Adrenal gland (tissue), 19 donors: ENCODE measurements at regions of chr13 and their contacts with region 1.

Region 1: DNA sequence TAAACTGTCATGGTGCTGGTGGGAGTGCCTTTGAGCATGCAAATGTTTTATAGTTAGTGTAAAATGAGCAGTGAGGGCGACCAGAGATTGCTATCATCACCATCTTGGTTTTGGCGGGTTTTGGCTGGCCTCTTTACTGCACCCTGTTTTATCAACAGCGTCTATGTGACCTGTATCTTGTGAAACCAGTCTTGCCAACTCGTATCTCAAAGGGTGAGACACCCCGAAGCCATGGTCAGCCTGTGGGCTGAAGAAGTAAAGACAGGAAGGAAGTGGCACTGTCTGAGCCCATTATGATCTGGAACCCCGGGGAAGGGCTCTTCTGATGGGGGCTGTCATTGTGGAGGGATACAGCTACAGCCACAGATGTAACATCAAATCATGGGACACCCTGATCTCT is 81.5 kb upstream of the FAM216B start:
- DNase-seq: no peak
- H3K4me3 ChIP-seq: no peak overlapping the region
- H3K27ac ChIP-seq: no peak overlapping the region
- H3K4me1 ChIP-seq: no peaks in the 10 kb centered on the region
- H3K27me3 ChIP-seq: no peaks in the 10 kb centered on the region
- CTCF ChIP-seq: no peak
- POLR2A ChIP-seq: no peak

Region 2: GRCh38 chr13:42681326-42682100 is 18.4 kb before region 1 on chr13:
- intact Hi-C with region 1: loop called in 1 of 2 experiments (anchors 2 kb)
- DNase-seq: no peak
- H3K4me3 ChIP-seq: no peak overlapping the region
- H3K27ac ChIP-seq: no peak overlapping the region
- H3K4me1 ChIP-seq: no peaks in the 10 kb centered on the region
- H3K27me3 ChIP-seq: no peaks in the 10 kb centered on the region
- CTCF ChIP-seq: no peak
- POLR2A ChIP-seq: no peak